Heart left ventricle (tissue), 16 donors: ENCODE measurements at regions of chr17 and their contacts with region 1.

Region 1: GRCh38 chr17:33779225-33779591 is 475.9 kb upstream of the CCL2 start:
- DNase-seq: peak in 2 of 5 donors; percentile 30 to 31
- ATAC-seq: peak in 1 of 4 donors; percentile 28
- H3K4me3 ChIP-seq: no peak overlapping the region
- H3K27ac ChIP-seq: no peak overlapping the region
- H3K4me1 ChIP-seq: no peaks in the 10 kb centered on the region
- H3K27me3 ChIP-seq: peaks cover 0 to 34% (median 0%) of the 10 kb centered on the region in 9 donors
- CTCF ChIP-seq: peak; percentile 91 to 98 (median 95)
- POLR2A ChIP-seq: no peak

Region 2: GRCh38 chr17:33858682-33859081 is 79.5 kb after region 1 on chr17:
- intact Hi-C with region 1: no loop called
- DNase-seq: no peak
- ATAC-seq: no peak
- H3K4me3 ChIP-seq: no peak overlapping the region
- H3K27ac ChIP-seq: no peak overlapping the region
- H3K4me1 ChIP-seq: no peaks in the 10 kb centered on the region
- H3K27me3 ChIP-seq: peaks cover 0 to 20% (median 0%) of the 10 kb centered on the region in 9 donors
- CTCF ChIP-seq: no peak
- POLR2A ChIP-seq: no peak

Region 3: GRCh38 chr17:34024806-34025551 is 245.8 kb after region 1 on chr17:
- intact Hi-C with region 1: loop called in 1 of 10 experiments (anchors 5 kb)
- DNase-seq: no peak
- ATAC-seq: no peak
- H3K4me3 ChIP-seq: no peak overlapping the region
- H3K27ac ChIP-seq: no peak overlapping the region
- H3K4me1 ChIP-seq: no peaks in the 10 kb centered on the region
- H3K27me3 ChIP-seq: peaks cover 0 to 20% (median 0%) of the 10 kb centered on the region in 9 donors
- CTCF ChIP-seq: peak in 1 of 12 donors; percentile 5
- POLR2A ChIP-seq: no peak